ENCODE measurements at regions of chr18 and their contacts with region 1.

Region 1: GRCh38 chr18:44286049-44286448 is 394.6 kb upstream of the SETBP1 start:
- DNase-seq: peak; percentile 67
- H3K4me3 ChIP-seq: no peak overlapping the region
- H3K27ac ChIP-seq: peak overlapping the region; percentile 45
- H3K4me1 ChIP-seq: peaks cover 24% of the 10 kb centered on the region
- H3K27me3 ChIP-seq: no peaks in the 10 kb centered on the region
- CTCF ChIP-seq: no peak
- POLR2A ChIP-seq: no peak

Region 2: DNA sequence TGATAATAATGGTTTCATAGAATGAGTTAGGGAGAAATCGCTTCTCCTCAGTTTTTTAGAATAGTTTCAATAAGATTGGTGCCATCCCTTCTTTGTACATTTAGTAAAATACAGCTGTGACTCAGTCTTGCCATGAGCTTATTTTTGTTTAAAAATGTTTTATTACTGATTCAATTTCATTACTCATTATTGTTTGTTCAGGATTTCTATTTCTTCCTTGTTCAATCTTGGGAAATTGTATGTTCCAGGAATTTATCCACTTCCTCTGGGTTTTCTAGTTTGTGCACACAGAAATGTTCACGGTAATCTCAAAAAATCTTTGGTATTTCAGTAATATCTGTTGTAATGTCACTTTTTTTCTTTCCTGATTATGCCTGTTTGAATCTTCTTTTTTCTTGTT is 23.1 kb after region 1 on chr18:
- CTCF ChIA-PET with region 1: no interaction called
- POLR2A ChIA-PET with region 1: no interaction called
- dilution Hi-C with region 1: no loop called
- intact Hi-C with region 1: loop called (anchors 1 kb)
- DNase-seq: peak; percentile 80
- H3K4me3 ChIP-seq: peak overlapping the region in 1 of 3 experiments; percentile 8
- H3K27ac ChIP-seq: peak overlapping the region; percentile 29
- H3K4me1 ChIP-seq: peaks cover 13% of the 10 kb centered on the region
- H3K27me3 ChIP-seq: no peaks in the 10 kb centered on the region
- CTCF ChIP-seq: no peak
- POLR2A ChIP-seq: no peak